ENCODE measurements at regions of chr10 and their contacts with region 1.

Region 1: DNA sequence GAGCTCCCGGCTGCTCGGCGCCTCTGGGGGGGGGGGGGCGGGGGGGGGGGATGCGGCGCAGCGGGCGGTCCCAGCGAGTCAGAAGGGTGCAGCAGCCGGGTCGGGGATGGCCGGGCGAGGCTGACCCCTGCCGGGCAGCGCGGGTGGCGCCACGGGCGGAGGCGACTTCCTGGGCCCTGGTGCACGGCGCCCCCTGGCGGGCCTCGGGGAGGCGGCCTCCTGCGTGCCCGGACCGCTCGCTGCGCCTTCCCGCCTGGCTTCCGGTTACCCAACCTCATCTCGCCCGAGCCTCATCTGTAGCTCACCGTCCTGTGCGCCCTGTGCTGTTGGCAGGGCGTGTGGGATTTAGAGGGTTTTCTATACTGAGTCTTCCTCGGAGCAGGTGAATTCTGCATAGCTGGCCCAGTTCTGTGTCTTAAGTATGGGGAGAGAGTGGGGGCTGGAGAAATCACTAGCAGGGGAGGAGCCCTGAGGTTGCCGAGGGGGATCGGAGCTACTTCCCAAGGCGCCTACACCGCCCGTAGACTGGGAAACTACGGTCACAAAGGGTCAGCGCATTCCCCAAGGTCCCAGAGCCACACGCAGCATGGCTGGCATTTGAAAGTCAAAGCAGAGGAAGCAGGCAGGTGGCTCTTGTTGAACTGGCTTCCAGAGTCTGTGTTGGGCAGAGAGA is 28.3 kb upstream of the WDFY4 start:
- DNase-seq: peak; percentile 88
- ATAC-seq: peak; percentile 93
- H3K4me3 ChIP-seq: peak overlapping the region; percentile 47
- H3K27ac ChIP-seq: no peak overlapping the region; the same call in 1 of the 2 replicates
- H3K4me1 ChIP-seq: peaks cover 7% of the 10 kb centered on the region; the same call in 1 of the 2 replicates
- H3K27me3 ChIP-seq: peaks cover 6% of the 10 kb centered on the region
- CTCF ChIP-seq: peak; percentile 100
- POLR2A ChIP-seq: no peak
- RAD21 ChIP-seq: peak; percentile 100

Region 2: GRCh38 chr10:48444266-48444665 is 212.1 kb before region 1 on chr10:
- CTCF ChIA-PET with region 1: interaction called, 6 read pairs
- POLR2A ChIA-PET with region 1: interaction called, 3 read pairs
- dilution Hi-C with region 1: no loop called
- in situ Hi-C with region 1: no loop called
- intact Hi-C with region 1: loop called (anchors 5 kb)
- DNase-seq: peak; percentile 51
- ATAC-seq: no peak
- H3K4me3 ChIP-seq: no peak overlapping the region
- H3K27ac ChIP-seq: no peak overlapping the region
- H3K4me1 ChIP-seq: peaks cover 11% of the 10 kb centered on the region
- H3K27me3 ChIP-seq: no peaks in the 10 kb centered on the region
- CTCF ChIP-seq: peak; percentile 33
- POLR2A ChIP-seq: no peak
- RAD21 ChIP-seq: peak; percentile 30; the same call in 1 of the 2 replicates

Region 3: DNA sequence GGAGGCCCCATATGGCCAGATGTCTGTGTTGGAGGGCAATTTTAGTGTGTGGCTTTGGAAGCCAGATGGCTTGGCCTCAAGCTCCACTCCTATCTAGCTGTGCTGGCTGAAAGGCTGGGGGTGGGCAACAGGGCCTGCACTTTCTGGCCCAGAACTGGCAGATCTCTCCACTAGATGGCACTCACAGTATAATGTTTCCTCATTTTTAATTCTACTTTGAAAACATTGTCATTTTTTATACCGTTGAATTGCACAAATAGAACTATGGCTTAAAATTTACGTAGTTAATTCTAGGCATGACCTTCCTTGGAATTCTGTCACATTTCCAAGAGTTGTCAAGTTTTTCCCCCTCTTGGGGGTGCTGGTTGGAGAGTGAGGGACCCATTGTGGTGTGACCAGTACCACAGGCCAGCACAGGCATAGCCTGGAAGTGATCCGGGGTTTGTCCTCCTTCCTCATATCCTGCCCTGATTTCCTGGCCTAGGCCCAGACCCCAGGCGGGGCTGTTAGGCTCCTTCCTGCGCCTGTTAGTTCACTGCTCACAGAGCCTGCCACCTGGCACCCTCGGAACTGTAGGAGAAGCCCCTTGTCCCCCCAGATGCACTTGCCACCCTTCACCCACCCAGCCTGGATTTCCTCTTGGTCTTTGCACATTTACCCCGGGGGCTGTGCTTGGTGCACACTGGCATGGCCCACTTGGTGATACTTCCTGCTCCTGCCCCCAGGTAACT is 104.4 kb before region 1 on chr10:
- CTCF ChIA-PET with region 1: interaction called, 33 read pairs
- POLR2A ChIA-PET with region 1: no interaction called
- dilution Hi-C with region 1: no loop called
- in situ Hi-C with region 1: loop called (anchors 5 kb)
- intact Hi-C with region 1: loop called (anchors 1 kb)
- DNase-seq: peak; percentile 59
- ATAC-seq: peak; percentile 88
- H3K4me3 ChIP-seq: no peak overlapping the region
- H3K27ac ChIP-seq: no peak overlapping the region
- H3K4me1 ChIP-seq: no peaks in the 10 kb centered on the region; the same call in 1 of the 2 replicates
- H3K27me3 ChIP-seq: no peaks in the 10 kb centered on the region
- CTCF ChIP-seq: peak; percentile 86
- POLR2A ChIP-seq: 0 out of 2 replicates have a peak, but pooled peaks have one; percentile 28
- RAD21 ChIP-seq: peak; percentile 86

Region 4: DNA sequence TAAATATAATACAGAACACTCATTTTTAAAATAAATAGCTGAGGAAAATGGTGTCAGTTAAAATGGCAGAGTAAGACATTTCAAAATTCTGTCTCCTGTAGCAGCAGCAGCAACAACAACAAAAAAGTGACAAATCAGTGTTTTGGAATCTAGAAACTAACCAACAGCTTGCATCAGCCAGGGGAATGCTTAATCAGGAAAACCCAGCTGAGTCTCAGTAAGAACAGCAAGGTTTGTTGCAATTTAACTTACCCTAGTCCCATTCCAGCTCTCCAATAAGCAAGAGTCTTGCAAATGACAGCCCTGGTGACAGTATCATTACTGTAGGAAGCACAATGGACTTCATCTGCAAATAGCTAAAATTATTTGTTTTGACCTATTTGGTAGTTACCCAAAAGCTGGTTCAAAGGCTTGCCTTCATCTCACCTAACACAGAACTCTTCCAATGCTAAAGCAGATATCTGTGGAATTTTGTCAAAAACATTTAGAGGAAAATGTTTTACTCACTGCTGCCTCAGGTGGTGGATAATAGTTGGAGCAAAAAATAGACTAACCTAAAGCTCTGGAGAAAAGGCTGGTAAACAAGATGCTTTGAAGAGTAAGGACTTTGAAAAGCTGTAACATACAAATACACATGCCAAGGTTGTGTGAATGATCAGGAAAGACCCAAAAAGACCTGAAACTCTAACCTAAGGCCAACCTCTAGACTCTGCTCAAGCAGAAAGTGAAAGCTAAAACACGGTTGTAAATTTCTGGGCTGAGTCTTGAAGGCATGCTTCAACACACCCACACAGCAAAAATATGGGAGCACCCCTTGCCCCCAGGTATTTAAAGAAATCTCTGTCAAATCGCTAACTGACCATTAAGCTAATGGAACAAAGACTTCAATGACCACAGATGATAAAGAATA is 41.6 kb before region 1 on chr10:
- CTCF ChIA-PET with region 1: interaction called, 48 read pairs
- POLR2A ChIA-PET with region 1: no interaction called
- dilution Hi-C with region 1: no loop called
- in situ Hi-C with region 1: no loop called
- intact Hi-C with region 1: no loop called
- DNase-seq: peak; percentile 34
- ATAC-seq: peak; percentile 70; the same call in 1 of the 2 replicates
- H3K4me3 ChIP-seq: peak overlapping the region; percentile 34; the same call in 1 of the 2 replicates
- H3K27ac ChIP-seq: no peak overlapping the region
- H3K4me1 ChIP-seq: peaks cover 6% of the 10 kb centered on the region; the same call in 1 of the 2 replicates
- H3K27me3 ChIP-seq: no peaks in the 10 kb centered on the region
- CTCF ChIP-seq: peak; percentile 32; the same call in 1 of the 2 replicates
- POLR2A ChIP-seq: no peak
- RAD21 ChIP-seq: no peak

Region 5: GRCh38 chr10:49323171-49323895 is 667.0 kb after region 1 on chr10:
- CTCF ChIA-PET with region 1: no interaction called
- POLR2A ChIA-PET with region 1: no interaction called
- dilution Hi-C with region 1: no loop called
- in situ Hi-C with region 1: no loop called
- intact Hi-C with region 1: no loop called
- DNase-seq: no peak
- ATAC-seq: no peak
- H3K4me3 ChIP-seq: no peak overlapping the region
- H3K27ac ChIP-seq: no peak overlapping the region
- H3K4me1 ChIP-seq: no peaks in the 10 kb centered on the region
- H3K27me3 ChIP-seq: peaks cover 13% of the 10 kb centered on the region
- CTCF ChIP-seq: no peak
- POLR2A ChIP-seq: no peak
- RAD21 ChIP-seq: no peak

Region 6: DNA sequence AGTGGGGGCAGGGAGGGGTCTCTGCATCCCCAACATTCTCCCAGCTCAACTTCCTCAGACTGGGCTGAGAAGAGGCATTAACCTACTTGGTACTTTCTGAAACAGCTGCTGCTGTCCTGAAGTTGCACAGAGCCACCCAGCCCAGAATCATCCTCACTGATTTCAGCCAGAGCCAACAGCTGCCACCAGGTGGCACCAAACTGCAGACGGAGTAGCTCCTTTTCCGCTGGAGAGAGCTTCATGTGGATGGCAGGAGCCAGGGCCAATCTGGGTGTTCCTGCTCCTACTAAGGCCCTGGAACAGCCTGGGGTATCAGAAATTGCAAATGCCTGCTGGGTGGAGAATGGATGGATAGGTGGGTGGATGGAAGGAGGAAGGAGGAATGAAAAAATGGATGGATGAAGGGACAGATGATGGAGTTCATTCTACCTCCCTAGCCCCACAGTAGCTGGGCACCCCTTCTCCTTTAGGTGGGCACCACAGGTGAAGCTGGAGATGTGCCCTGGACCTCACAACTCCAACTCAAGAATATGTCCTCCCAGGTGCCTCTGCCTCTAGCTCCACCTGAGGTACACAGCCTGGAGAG is 751.3 kb after region 1 on chr10:
- CTCF ChIA-PET with region 1: interaction called, 4 read pairs
- POLR2A ChIA-PET with region 1: no interaction called
- dilution Hi-C with region 1: no loop called
- in situ Hi-C with region 1: no loop called
- intact Hi-C with region 1: loop called (anchors 2 kb)
- DNase-seq: peak; percentile 68
- ATAC-seq: peak; percentile 97
- H3K4me3 ChIP-seq: no peak overlapping the region
- H3K27ac ChIP-seq: no peak overlapping the region
- H3K4me1 ChIP-seq: no peaks in the 10 kb centered on the region
- H3K27me3 ChIP-seq: peaks cover 51% of the 10 kb centered on the region
- CTCF ChIP-seq: peak; percentile 83
- POLR2A ChIP-seq: no peak
- RAD21 ChIP-seq: peak; percentile 74

Measured in IMR-90 (cell line).